Left cardiac atrium (tissue), 4 donors: ENCODE measurements at regions of chr15 and their contacts with region 1.

Region 1: DNA sequence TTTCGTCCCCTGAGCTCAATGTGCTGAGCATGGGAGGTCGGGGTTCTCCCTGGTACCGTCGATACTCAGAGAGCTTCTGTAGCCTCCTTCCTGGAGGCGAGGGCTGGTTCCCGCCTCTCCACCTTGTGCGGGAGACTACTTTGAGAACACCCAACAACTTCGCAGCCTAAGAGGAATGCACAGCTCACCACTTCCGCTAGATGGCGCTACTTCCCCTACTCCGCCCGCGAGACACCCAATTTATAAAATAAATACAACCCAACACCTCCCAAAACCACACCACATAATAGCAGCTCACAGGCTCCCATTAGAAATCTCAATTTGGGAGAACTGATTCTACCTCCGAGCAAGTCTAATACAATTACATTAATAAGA is 1.2 kb downstream of the RGMA start:
- DNase-seq: peak; percentile 69
- ATAC-seq: peak; percentile 75 to 83

Region 2: DNA sequence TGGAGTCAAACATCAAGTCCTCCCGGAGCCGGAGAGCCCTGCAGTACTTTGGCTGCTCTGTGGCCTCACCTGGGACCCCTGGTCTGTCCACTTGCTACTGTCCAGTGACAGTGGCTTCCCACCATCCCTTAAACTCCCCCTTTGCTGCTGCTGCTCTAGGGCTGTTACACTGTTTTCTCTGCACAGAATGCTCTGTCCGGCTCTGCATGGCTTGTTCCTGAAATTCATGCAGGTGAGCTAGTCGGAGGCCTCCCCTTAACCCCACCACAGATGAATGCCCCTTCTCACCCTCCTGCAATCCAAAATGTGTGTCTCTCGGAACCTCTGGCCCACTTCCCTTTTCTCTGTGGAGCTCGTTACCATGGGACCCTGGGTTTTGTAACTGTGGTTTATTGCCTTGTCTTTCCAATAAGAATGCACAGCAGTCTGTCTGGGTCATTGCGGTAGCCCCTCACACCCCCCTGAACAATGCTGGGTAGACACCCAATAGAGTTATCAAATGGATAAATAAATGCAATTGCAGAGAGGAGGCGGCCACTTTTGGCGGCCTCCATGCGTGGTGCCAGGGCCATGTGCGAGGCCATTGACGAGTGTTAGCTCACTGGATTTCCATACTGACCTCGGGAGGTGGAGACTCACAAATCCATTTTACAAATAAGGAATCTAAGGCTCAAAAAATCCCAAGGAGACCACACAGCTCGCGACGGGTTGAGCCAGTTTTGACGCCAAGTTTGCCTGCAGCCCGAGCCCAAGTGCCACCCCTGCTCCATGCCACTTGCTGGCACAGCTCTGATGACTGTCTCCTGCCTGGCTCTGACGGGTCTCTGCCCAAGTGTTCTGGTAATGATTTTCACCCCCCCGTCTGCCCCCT is 47.3 kb before region 1 on chr15:
- intact Hi-C with region 1: no loop called
- DNase-seq: peak; percentile 15
- ATAC-seq: no peak

Region 3: DNA sequence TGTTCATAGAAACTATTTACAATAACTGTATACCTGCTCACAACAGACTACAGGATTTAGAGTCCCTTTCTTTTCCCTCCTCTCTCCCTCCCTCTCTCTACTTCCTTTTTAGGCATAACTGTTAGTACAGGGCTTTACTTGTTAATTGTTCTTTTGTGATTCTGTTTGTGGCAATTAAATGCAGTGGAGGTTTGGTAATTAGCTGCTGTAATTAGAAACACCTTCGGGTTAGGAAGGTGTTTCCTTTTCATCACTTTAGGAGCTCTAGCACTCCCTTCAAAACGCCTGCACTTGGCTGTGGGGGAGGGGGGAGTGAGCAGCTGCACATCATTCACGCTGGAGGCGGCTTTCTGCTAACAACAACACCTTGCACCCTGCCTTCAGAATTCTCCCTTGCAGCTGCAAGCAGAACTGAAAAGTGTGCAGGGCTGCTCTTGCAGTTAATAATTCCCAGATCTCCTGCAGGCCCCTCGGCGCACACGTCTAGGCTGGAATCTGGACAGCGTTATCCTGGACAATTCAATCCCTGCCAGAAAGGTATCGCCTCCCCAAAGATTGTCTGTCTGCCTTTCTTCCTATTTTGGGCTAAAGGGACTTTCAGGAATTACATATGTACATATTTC is 243.8 kb after region 1 on chr15:
- intact Hi-C with region 1: loop called in 1 of 2 experiments (anchors 5 kb)
- DNase-seq: no peak
- ATAC-seq: peak in 1 of 2 donors; percentile 22

Region 4: GRCh38 chr15:93617443-93617842 is 529.6 kb after region 1 on chr15:
- intact Hi-C with region 1: loop called in 1 of 2 experiments (anchors 5 kb)
- DNase-seq: peak; percentile 20
- ATAC-seq: no peak